RWPE1 (cell line): ENCODE measurements at regions of chr9 and their contacts with region 1.

Region 1: GRCh38 chr9:94097788-94098414 is 13.6 kb downstream of the PTPDC1 start:
- DNase-seq: peak; percentile 94
- H3K27ac ChIP-seq: peak overlapping the region; percentile 80
- CTCF ChIP-seq: no peak

Region 2: GRCh38 chr9:94108584-94108983 is 10.7 kb after region 1 on chr9:
- CTCF ChIA-PET with region 1: no interaction called
- POLR2A ChIA-PET with region 1: interaction called, 15 read pairs
- DNase-seq: no peak
- H3K27ac ChIP-seq: peak overlapping the region; percentile 61
- CTCF ChIP-seq: no peak